Activated CD4-positive, alpha-beta memory T cell treated with anti-CD3 and anti-CD28 coated beads for 36 hours (primary cell): ENCODE measurements at regions of chr22 and their contacts with region 1.

Region 1: DNA sequence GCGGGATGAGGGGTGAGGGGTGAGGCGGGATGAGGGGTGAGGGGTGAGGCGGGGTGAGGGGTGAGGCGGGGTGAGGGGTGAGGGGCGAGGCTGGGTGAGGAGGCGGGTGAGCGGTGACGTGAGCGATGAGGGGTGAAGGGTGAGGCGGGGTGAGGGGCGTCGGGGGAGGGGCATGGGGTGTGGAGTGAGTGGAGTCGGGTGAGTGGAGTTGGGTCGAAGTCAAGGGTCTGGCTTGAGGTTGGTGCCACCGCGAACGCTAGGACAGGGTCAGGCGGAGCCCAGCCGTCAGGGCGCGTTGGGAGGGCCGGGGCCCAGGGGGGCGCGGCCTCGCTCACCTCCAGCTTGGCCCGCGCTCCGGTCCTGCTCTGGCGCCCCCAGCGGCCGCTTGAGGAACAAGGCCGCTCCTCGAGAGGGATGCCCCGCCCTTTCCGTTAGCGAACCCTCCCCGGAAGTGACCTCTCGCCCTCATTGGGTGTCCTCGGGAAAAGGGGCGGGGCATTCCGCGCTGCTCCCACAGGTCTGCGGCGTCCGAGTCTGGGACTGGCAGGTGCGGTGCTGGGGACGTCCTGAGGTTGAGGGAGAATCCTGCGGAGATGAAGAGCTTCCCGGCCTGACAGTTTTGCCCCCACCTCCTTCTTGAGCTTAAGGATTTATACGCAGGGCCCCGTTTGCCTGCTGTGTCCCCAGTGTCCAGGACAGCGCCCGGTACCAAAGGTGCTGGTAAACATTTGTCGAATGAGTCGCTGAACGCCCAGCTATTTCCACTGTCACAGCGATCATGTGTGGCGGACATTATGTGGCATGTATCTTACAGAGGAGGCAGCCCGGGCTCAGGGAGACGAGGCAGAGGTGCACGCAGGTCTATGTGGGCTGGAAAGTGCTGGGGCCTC is at the start of gene SYCE3:
- DNase-seq: peak; percentile 98
- H3K4me3 Mint-ChIP-seq: peak within 1 kb of the TSS; percentile 90
- H3K27ac Mint-ChIP-seq: peak within 1 kb of the TSS; percentile 60
- H3K4me1 Mint-ChIP-seq: peaks cover 15% of the 10 kb centered on the region
- H3K27me3 Mint-ChIP-seq: no peaks in the 10 kb centered on the region
- total RNA-seq, gene SYCE3: 0.87 to 1.0 TPM

Region 2: DNA sequence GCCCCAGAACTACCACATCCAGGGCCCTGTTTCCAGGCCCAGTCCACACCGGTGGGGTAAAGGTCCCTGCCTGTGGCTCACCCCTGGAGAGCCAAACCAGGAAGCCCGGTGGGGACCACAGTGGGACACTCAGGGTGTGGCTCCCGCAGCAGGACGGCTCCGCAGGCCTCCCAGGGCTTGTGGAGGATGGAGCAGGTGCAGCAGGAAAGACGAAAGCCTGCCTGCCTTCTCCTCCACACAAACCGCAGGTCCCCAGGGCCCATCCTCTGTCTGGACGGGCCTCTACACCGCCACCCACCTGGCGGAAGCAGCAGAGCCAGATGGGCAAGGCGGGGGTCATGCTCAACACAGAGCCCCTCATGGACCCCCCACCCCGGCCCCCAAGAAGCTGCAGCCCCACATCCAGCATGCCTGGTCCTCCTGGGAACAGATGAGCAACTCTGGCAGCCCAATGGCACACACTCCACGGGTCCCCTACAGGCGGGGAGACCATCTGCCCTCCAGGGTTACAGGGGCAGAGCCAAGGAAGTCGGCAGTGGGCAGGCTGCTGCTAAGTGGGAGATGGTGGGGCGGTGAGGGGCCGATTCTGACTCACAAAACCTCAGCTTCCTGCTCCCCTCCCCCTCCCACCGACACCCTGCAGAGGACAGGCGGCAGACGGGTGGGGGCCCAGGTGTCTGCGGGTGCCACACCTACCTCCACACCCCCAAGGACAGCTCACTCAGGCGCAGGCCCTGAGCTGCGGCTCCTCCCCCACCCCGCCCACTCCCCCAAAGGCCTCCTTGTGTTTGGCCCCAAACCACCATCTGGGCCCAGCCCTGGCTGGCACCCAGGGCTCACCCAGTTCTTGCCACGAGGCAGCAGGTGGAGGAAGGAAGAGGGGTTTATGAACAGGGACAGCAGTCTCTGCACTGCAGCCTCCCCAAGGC is 93.1 kb before region 1 on chr22:
- CTCF ChIA-PET with region 1: interaction called, 10 read pairs
- POLR2A ChIA-PET with region 1: no interaction called
- intact Hi-C with region 1: no loop called
- DNase-seq: peak; percentile 97
- H3K4me3 Mint-ChIP-seq: peak overlapping the region; percentile 53
- H3K27ac Mint-ChIP-seq: peak overlapping the region; percentile 92
- H3K4me1 Mint-ChIP-seq: peaks cover 55% of the 10 kb centered on the region
- H3K27me3 Mint-ChIP-seq: no peaks in the 10 kb centered on the region

Region 3: GRCh38 chr22:50525390-50526068 is 37.2 kb before region 1 on chr22 and contains the start of gene SCO2:
- CTCF ChIA-PET with region 1: interaction called, 71 read pairs
- POLR2A ChIA-PET with region 1: interaction called, 29 read pairs
- intact Hi-C with region 1: loop called (anchors 1 kb)
- DNase-seq: peak; percentile 99
- H3K4me3 Mint-ChIP-seq: peak within 1 kb of the TSS; percentile 83
- H3K27ac Mint-ChIP-seq: peak within 1 kb of the TSS; percentile 95
- H3K4me1 Mint-ChIP-seq: peaks cover 42% of the 10 kb centered on the region
- H3K27me3 Mint-ChIP-seq: no peaks in the 10 kb centered on the region
- total RNA-seq, gene SCO2: 1.9 to 5.6 TPM

Region 4: DNA sequence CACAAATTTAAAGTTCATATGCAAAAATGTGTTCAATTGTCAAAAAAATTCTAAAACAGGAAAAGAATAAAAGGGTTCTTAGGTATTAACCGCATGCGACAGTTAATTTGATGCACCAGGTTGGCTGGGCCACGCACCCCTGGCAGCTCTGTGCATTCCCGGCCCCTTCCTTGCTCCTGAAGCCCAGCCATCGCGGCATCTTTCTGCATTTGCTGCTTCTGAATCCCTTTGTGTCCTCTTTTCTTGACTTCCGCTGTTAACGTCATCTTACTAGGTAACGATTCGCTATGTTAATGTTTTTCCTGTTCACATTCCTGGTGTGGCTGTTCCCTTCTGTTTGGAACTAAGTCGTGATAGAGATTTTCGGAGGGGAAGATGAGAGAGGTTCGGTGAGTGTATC is 25.0 kb before region 1 on chr22:
- CTCF ChIA-PET with region 1: interaction called, 23 read pairs
- POLR2A ChIA-PET with region 1: interaction called, 13 read pairs
- intact Hi-C with region 1: no loop called
- DNase-seq: no peak
- H3K4me3 Mint-ChIP-seq: no peak overlapping the region
- H3K27ac Mint-ChIP-seq: peak overlapping the region; percentile 100
- H3K4me1 Mint-ChIP-seq: peaks cover 81% of the 10 kb centered on the region
- H3K27me3 Mint-ChIP-seq: no peaks in the 10 kb centered on the region

Region 5: GRCh38 chr22:50551160-50551752 is 11.5 kb before region 1 on chr22:
- CTCF ChIA-PET with region 1: interaction called, 46 read pairs
- POLR2A ChIA-PET with region 1: interaction called, 12 read pairs
- intact Hi-C with region 1: loop called (anchors 1 kb)
- DNase-seq: no peak
- H3K4me3 Mint-ChIP-seq: no peak overlapping the region
- H3K27ac Mint-ChIP-seq: no peak overlapping the region
- H3K4me1 Mint-ChIP-seq: peaks cover 18% of the 10 kb centered on the region
- H3K27me3 Mint-ChIP-seq: no peaks in the 10 kb centered on the region

Region 6: DNA sequence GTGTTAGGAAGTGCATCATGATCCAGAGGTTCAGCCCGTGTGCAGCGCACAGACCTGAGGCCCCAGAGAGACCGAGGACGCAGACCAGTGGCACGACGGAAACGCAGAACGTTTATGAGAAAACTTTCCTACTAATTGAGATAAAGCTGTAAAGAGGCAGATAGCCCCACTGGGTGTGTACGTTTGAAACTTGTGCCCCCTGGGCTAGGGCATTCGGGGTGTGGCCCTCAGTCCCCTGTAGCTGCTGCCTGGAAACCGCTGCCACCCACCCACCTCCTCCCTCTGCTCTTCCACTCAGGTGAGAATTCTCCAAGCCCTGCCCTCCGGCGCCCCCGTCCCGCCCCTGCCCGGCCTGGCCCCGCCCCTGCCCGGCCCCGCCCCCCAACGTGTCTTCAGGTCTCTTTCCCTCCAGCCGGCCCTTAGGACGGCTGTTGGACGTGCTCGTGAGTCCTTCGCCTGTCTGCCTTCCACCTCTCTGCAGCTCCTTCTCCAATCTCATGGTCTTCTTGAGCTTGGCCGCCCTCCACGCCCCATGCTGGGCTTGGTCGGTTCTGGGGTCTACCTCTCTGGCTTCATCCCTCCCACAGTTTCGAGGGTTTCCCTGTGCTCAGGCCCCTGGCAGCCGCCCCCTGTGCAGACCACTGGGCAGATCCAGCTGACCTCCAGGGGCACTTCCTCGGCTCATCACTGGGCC is 49.9 kb after region 1 on chr22:
- CTCF ChIA-PET with region 1: no interaction called
- POLR2A ChIA-PET with region 1: no interaction called
- intact Hi-C with region 1: loop called (anchors 10 kb)
- DNase-seq: peak; percentile 27
- H3K4me3 Mint-ChIP-seq: no peak overlapping the region
- H3K27ac Mint-ChIP-seq: no peak overlapping the region
- H3K4me1 Mint-ChIP-seq: peaks cover 3% of the 10 kb centered on the region
- H3K27me3 Mint-ChIP-seq: peaks cover 20% of the 10 kb centered on the region